Heart left ventricle (tissue), 16 donors: ENCODE measurements at regions of chr2 and their contacts with region 1.

Region 1: GRCh38 chr2:209322041-209322440 is 101.8 kb upstream of the MAP2 start:
- DNase-seq: no peak
- ATAC-seq: no peak
- H3K4me3 ChIP-seq: no peak overlapping the region
- H3K27ac ChIP-seq: no peak overlapping the region
- H3K4me1 ChIP-seq: no peaks in the 10 kb centered on the region
- H3K27me3 ChIP-seq: no peaks in the 10 kb centered on the region
- CTCF ChIP-seq: peak in 2 of 12 donors; percentile 9 to 11
- POLR2A ChIP-seq: no peak

Region 2: DNA sequence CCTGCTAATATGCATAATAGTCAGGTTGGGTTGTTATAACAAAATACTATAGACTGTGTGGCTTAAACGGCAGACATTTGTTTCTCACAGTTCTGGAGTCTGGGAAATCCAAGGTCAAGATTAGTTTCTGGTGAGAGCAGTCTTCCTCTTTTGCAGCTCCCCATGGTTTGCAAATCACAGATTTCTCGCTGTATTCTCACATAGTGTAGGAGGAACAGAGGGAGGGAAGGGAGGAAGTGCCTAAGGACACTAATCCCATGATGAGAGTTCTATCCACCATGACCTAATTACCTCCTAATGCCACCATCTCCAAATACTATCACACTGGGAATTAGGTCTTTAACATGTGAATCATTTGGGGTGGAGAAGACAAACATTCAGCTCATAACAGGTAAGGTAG is 935.5 kb before region 1 on chr2:
- intact Hi-C with region 1: loop called in 1 of 10 experiments (anchors 5 kb)
- DNase-seq: no peak
- ATAC-seq: no peak
- H3K4me3 ChIP-seq: no peak overlapping the region
- H3K27ac ChIP-seq: no peak overlapping the region
- H3K4me1 ChIP-seq: no peaks in the 10 kb centered on the region
- H3K27me3 ChIP-seq: peaks cover 0 to 17% (median 0%) of the 10 kb centered on the region in 9 donors
- CTCF ChIP-seq: no peak
- POLR2A ChIP-seq: no peak

Region 3: GRCh38 chr2:208407667-208408066 is 914.4 kb before region 1 on chr2:
- intact Hi-C with region 1: loop called in 1 of 10 experiments (anchors 10 kb)
- DNase-seq: no peak
- ATAC-seq: no peak
- H3K4me3 ChIP-seq: no peak overlapping the region
- H3K27ac ChIP-seq: no peak overlapping the region
- H3K4me1 ChIP-seq: peaks cover 0 to 10% (median 6%) of the 10 kb centered on the region in 12 donors
- H3K27me3 ChIP-seq: peaks cover 11 to 73% (median 30%) of the 10 kb centered on the region in 9 donors
- CTCF ChIP-seq: peak in 6 of 12 donors; percentile 10 to 37 (median 25)
- POLR2A ChIP-seq: no peak